Activated T-helper 2 cell treated with anti-CD3 and anti-CD28 coated beads, Interferon-gamma antibody, Interleukin-2, Interleukin-4, amounts not matched to agents 10 μg/mL and 5 μg/mL and 100 μg/mL, durations not matched to agents 14 hours and 24 hours and 36 hours (primary cell): ENCODE measurements at regions of chr9 and their contacts with region 1.

Region 1: GRCh38 chr9:91423785-91424402 is at the start of gene NFIL3:
- DNase-seq: peak; percentile 71
- H3K4me3 Mint-ChIP-seq: peak within 1 kb of the TSS; percentile 100
- H3K27ac Mint-ChIP-seq: peak within 1 kb of the TSS; percentile 99
- H3K4me1 Mint-ChIP-seq: peaks cover 51% of the 10 kb centered on the region
- H3K27me3 Mint-ChIP-seq: no peaks in the 10 kb centered on the region
- total RNA-seq, gene NFIL3: 191 and 192 TPM in 2 replicates

Region 2: GRCh38 chr9:90914868-90915483 is 508.9 kb before region 1 on chr9:
- intact Hi-C with region 1: loop called (anchors 1 kb)
- DNase-seq: peak; percentile 54
- H3K4me3 Mint-ChIP-seq: no peak overlapping the region
- H3K27ac Mint-ChIP-seq: peak overlapping the region; percentile 62
- H3K4me1 Mint-ChIP-seq: peaks cover 14% of the 10 kb centered on the region
- H3K27me3 Mint-ChIP-seq: no peaks in the 10 kb centered on the region

Region 3: DNA sequence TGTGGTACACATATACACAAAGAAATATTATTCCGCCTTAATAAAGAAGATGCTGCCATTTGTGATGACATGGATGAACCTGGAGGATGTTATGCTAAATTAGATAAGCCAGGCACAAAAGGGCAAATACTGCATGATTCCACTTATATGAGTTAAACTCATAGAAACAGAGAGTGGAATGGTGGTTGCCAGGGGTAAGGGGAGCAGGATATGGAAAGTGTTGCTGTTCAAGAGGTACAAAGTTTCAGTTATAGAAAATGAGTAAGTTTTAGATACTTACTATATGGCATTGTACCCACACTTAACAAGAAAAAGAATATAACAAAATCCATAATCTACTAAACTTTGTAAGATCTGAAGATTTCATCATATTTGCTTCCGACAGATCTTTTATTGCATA is 370.1 kb before region 1 on chr9:
- intact Hi-C with region 1: loop called (anchors 2 kb)
- DNase-seq: no peak
- H3K4me3 Mint-ChIP-seq: no peak overlapping the region
- H3K27ac Mint-ChIP-seq: peak overlapping the region; percentile 86
- H3K4me1 Mint-ChIP-seq: peaks cover 67% of the 10 kb centered on the region
- H3K27me3 Mint-ChIP-seq: no peaks in the 10 kb centered on the region

Region 4: GRCh38 chr9:91207729-91208418 is 216.0 kb before region 1 on chr9:
- intact Hi-C with region 1: loop called (anchors 5 kb)
- DNase-seq: no peak
- H3K4me3 Mint-ChIP-seq: peak overlapping the region; percentile 49
- H3K27ac Mint-ChIP-seq: peak overlapping the region; percentile 93
- H3K4me1 Mint-ChIP-seq: peaks cover 67% of the 10 kb centered on the region
- H3K27me3 Mint-ChIP-seq: no peaks in the 10 kb centered on the region

Region 5: DNA sequence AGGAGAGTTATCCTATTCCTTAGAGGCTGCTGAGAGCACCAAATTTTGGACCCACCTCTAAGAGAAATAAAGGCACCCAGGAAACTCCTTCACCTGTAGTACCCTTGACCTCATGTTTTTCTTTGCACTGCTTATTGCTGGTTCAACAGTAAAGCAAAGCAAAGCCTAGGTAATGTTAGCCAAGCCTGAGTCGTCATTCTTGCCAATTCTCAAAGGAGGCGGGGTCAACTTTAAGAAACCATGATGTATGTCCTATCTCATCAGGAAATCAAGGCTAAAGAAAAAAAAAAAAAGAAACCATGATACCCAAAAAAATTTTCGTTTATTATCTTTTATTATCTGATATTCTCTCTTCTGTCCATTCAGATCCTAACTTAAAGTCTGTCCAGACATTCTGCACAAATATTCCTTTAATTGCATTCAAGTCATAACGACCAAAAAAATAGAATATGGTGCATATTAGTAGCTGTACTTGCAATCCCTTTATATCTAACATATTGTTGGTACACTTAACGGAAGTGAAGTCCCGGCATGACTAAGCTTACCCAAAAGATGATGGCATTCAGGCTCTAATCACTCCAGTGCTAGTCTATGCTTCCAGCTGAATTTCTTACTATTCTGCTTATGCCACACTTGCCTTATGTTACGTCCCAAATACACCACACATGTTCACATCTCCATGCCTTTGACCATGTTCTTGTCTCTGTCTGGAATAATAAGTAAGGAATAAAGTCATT is 64.0 kb before region 1 on chr9:
- intact Hi-C with region 1: loop called (anchors 1 kb)
- DNase-seq: no peak
- H3K4me3 Mint-ChIP-seq: peak overlapping the region; percentile 98
- H3K27ac Mint-ChIP-seq: peak overlapping the region; percentile 99
- H3K4me1 Mint-ChIP-seq: peaks cover 64% of the 10 kb centered on the region
- H3K27me3 Mint-ChIP-seq: no peaks in the 10 kb centered on the region

Region 6: GRCh38 chr9:91500509-91501011 is 76.7 kb after region 1 on chr9:
- intact Hi-C with region 1: no loop called
- DNase-seq: no peak
- H3K4me3 Mint-ChIP-seq: no peak overlapping the region
- H3K27ac Mint-ChIP-seq: no peak overlapping the region
- H3K4me1 Mint-ChIP-seq: peaks cover 26% of the 10 kb centered on the region
- H3K27me3 Mint-ChIP-seq: peaks cover 5% of the 10 kb centered on the region

Region 7: DNA sequence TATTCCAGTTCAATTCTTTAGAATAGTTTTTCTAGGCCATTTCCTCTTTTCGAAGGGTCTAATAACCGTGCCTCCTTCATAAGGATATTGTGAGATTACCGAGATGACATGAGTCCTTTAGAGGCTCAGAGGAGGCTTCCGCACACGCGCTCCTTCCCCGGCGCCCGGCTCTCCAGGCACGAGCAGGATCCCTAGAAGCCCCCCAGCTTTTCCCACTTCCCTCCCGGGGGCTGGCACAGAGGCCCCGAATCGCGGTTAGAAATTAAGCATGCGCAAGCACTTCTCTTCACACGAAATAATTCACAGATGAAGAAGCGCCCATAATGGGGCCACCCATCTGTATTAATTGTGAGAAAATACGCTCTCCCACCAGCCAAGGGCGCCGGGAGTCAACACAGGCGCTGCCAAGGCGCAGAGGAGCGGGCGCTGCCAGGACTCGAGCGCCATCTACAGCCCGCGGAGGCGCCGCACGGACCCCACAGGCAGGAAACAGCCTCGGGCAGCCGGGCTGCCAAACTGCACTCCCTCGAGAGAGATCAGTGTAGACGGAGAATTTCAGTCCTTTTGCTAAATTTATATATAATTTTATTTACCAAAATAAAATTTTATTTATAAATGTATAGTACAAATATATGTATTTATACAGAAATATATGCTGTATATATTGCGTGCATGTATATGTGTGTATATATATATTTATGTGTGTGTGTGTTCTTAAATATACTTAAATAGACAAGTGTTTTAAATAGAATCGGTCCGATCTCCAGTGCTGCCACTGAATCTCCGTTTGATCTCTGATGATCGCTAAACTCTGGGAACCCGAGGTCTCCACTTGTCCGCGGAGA is 257.8 kb after region 1 on chr9:
- intact Hi-C with region 1: loop called (anchors 5 kb)
- DNase-seq: peak; percentile 64
- H3K4me3 Mint-ChIP-seq: peak overlapping the region; percentile 55
- H3K27ac Mint-ChIP-seq: no peak overlapping the region
- H3K4me1 Mint-ChIP-seq: peaks cover 6% of the 10 kb centered on the region
- H3K27me3 Mint-ChIP-seq: peaks cover 28% of the 10 kb centered on the region